ENCODE measurements at regions of chr19 and their contacts with region 1.

Region 1: GRCh38 chr19:50368649-50369570 is 3.5 kb upstream of the NAPSA start:
- DNase-seq: peak; percentile 94
- H3K4me3 Mint-ChIP-seq: peak overlapping the region; percentile 95
- H3K27ac Mint-ChIP-seq: peak overlapping the region; percentile 93
- H3K4me1 Mint-ChIP-seq: peaks cover 35% of the 10 kb centered on the region
- H3K27me3 Mint-ChIP-seq: no peaks in the 10 kb centered on the region

Region 2: DNA sequence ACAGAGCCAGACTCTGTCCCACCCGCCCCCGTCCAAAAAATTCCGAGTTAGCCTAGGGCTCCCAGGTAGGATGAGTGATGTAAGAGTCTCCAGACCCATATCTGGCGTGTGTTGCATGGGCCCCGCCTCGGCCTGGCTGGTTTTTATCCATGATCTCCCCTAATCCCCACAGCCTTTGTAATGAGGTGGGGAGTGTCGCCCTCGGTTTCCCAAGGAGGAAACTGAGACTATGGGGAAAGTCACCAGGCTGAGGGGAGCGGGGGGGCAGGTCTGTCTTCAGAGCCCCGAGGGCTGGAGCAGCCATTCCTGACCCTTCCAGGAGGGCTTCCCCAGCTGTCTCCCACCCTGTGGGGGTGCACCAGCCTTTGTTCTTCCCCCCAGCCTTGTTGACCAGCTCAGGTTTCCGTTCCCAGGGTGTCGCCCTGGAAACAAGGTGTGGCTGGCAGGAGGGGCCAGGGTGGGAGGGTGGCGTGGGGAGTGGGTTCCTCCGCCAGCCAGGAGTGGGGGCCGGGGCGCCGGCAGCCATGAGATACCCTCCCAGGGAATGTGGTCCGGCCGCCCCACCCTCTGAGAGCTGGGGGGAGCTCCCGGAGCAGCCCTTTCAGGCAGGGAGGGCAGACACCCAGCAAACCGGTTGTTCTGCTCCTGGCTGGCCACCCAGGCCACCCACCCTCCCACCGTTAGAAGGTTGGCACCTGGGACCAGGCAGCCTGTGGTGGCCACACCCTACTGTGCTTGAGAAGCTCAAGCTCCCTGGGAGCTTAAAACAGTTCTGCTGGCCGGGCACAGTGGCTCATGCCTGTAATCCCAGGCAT is 153.9 kb before region 1 on chr19:
- intact Hi-C with region 1: no loop called
- DNase-seq: no peak
- H3K4me3 Mint-ChIP-seq: no peak overlapping the region
- H3K27ac Mint-ChIP-seq: no peak overlapping the region
- H3K4me1 Mint-ChIP-seq: no peaks in the 10 kb centered on the region
- H3K27me3 Mint-ChIP-seq: no peaks in the 10 kb centered on the region

Region 3: DNA sequence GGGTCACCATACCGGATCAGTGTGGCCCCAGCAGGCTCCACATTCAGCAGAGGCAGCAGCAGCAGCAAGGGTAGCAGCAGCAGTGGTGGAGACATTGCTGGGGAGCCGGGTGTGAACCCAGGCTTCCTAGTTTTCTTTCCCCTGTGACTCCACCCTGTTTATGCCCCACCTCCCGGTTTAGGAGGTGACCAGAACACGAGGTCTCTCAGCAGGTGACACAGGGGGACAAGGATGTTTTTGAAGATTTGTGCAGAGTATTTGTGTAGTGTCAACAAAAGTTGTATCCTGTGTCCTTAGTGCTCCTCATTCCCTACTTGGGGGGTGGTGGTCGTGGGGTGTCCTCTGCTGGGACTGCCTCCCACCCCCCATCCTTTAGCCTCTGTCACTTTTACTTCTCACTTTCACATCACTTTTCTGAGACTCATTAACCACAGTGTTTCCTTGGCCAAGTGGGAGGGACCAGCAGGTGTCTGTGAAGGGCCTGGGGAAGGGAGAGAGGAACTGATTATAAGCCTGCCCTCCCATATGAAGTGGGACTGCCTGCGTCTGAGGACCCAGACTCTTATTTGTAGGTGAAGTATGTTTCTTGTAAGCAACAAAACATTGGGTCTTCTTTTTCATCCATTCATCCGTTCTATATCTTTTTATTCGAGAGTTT is 24.1 kb before region 1 on chr19:
- intact Hi-C with region 1: loop called (anchors 1 kb)
- DNase-seq: no peak
- H3K4me3 Mint-ChIP-seq: peak overlapping the region; percentile 39
- H3K27ac Mint-ChIP-seq: peak overlapping the region; percentile 70
- H3K4me1 Mint-ChIP-seq: peaks cover 27% of the 10 kb centered on the region
- H3K27me3 Mint-ChIP-seq: no peaks in the 10 kb centered on the region

Region 4: GRCh38 chr19:50383852-50384684 is 15.2 kb after region 1 on chr19 and contains the start of gene POLD1:
- intact Hi-C with region 1: loop called (anchors 1 kb)
- DNase-seq: peak; percentile 100
- H3K4me3 Mint-ChIP-seq: peak within 1 kb of the TSS; percentile 93
- H3K27ac Mint-ChIP-seq: peak within 1 kb of the TSS; percentile 90
- H3K4me1 Mint-ChIP-seq: peaks cover 27% of the 10 kb centered on the region
- H3K27me3 Mint-ChIP-seq: no peaks in the 10 kb centered on the region
- total RNA-seq, gene POLD1: 188 and 204 TPM in 2 replicates

Region 5: GRCh38 chr19:50414864-50415660 is 46.2 kb after region 1 on chr19:
- intact Hi-C with region 1: loop called (anchors 1 kb)
- DNase-seq: peak; percentile 92
- H3K4me3 Mint-ChIP-seq: no peak overlapping the region
- H3K27ac Mint-ChIP-seq: no peak overlapping the region
- H3K4me1 Mint-ChIP-seq: peaks cover 13% of the 10 kb centered on the region
- H3K27me3 Mint-ChIP-seq: peaks cover 8% of the 10 kb centered on the region

Region 6: DNA sequence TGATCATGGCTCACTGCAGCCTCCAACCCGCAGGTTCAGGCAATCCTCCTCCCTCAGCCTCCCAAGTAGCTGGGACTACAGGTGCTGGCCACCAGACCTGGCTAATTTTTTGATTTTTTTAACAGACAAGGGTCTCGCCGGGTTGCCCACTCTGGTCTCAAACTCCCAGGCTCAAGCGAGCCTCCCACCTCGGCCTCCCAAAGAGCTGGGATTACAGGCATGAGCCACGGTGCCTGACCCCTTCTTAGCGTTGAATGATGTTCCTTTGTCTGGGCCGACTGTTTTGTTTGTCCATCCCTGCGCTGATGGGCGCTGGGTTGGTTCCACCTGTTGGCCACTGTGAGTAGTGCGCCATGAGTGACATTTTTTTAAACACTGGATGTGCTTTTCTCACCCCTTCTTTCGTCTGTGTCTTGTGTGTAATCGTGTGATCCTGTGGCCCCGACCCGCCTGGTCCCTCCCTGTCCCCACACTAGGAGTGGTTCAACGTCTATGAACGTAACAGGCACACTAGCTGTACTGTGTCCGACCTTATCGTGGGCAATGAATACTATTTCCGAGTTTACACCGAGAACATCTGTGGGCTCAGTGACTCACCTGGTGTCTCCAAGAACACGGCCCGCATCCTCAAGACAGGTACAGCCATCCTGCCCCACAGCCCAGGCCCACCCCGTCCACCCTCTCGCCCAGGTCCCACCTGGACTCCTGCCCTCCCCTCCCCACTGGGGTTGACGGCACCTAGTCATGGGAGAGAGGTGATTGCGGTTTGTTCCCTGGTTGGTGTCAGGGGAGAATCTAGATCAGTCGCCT is 92.4 kb after region 1 on chr19:
- intact Hi-C with region 1: loop called (anchors 1 kb)
- DNase-seq: peak; percentile 90
- H3K4me3 Mint-ChIP-seq: peak overlapping the region; percentile 40
- H3K27ac Mint-ChIP-seq: no peak overlapping the region
- H3K4me1 Mint-ChIP-seq: peaks cover 12% of the 10 kb centered on the region
- H3K27me3 Mint-ChIP-seq: peaks cover 5% of the 10 kb centered on the region

Region 7: GRCh38 chr19:50724522-50725217 is 355.8 kb after region 1 on chr19:
- intact Hi-C with region 1: loop called (anchors 10 kb)
- DNase-seq: peak; percentile 99
- H3K4me3 Mint-ChIP-seq: peak overlapping the region; percentile 93
- H3K27ac Mint-ChIP-seq: peak overlapping the region; percentile 81
- H3K4me1 Mint-ChIP-seq: peaks cover 25% of the 10 kb centered on the region
- H3K27me3 Mint-ChIP-seq: peaks cover 49% of the 10 kb centered on the region